Mammary epithelial cell (primary cell): ENCODE measurements at regions of chr1 and their contacts with region 1.

Region 1: DNA sequence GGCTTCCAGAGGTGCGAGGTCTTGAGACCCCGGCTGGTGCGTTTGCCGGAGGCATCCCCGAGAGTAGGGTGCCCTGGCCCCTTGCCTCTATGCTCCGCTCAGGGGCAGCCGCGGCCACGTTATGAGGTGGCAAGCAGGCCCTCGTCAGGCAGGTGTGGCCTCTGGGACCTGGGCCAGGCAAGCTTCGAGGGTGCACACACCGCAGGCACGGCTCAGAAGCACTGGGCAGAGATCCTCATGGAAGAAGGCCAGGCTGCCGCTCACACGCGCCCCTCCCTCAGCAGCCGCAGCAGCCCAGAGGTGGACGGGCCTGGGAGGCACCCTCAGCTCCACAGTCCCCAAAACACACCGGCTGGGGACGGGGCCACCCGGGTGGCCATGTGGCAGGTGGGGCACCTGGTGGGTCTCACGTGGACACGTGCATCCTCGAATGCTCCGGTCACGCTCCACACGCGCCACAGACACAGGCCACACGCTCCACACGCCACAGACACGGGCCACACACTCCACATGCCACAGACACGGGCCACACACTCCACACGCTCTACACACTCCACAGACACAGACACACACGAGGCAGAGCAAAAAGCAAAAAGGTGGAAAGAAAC is 6.5 kb downstream of the SDF4 start:
- DNase-seq: no peak
- H3K4me3 ChIP-seq: no peak overlapping the region
- H3K27ac ChIP-seq: no peak overlapping the region
- H3K4me1 ChIP-seq: peaks cover 6% of the 10 kb centered on the region
- H3K27me3 ChIP-seq: no peaks in the 10 kb centered on the region
- CTCF ChIP-seq: no peak

Region 2: GRCh38 chr1:960040-960756 is 265.1 kb before region 1 on chr1 and contains the start of gene KLHL17:
- CTCF ChIA-PET with region 1: no interaction called
- dilution Hi-C with region 1: loop called (anchors 10 kb)
- in situ Hi-C with region 1: no loop called
- intact Hi-C with region 1: no loop called
- DNase-seq: peak; percentile 71
- H3K4me3 ChIP-seq: peak within 1 kb of the TSS; percentile 49 to 67 (median 58)
- H3K27ac ChIP-seq: no peak within 1 kb of the TSS
- H3K4me1 ChIP-seq: peaks cover 15% of the 10 kb centered on the region
- H3K27me3 ChIP-seq: no peaks in the 10 kb centered on the region
- CTCF ChIP-seq: no peak
- total RNA-seq, gene KLHL17: 4.3 to 18.9 TPM

Region 3: DNA sequence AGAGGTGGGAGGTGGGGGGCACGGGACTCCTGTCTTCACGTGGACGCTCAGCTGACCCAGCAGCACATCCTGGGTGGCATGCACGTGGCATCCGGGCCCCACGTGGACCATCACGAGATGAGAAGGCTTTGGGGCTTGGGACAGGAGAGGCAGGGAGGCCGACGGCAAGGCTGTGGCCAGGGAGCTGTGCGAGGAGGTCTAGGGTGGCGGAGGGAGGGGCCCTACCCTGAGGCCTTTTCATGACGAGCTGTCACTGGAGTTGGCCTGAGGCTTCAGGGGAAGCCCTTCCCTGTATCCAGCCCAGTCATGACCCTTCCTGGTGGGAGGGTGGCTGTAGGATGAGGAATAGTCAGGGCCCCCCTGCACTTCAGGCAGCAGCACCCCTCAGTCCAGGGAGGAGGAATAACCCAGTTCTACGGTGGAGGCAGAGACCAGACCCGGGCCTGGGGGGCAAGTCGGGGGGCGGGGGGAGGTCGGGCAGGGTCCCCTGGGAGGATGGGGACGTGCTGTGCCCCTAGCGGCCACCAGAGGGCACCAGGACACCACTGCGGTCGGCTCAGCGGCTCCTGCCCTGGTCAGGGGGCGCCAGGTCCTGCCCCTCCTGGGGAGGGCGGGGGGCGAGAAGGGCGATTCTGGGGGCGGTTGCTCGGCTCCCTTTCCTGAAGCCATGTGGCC is 241.4 kb before region 1 on chr1:
- CTCF ChIA-PET with region 1: no interaction called
- dilution Hi-C with region 1: no loop called
- in situ Hi-C with region 1: no loop called
- intact Hi-C with region 1: no loop called
- DNase-seq: no peak
- H3K4me3 ChIP-seq: no peak overlapping the region
- H3K27ac ChIP-seq: no peak overlapping the region
- H3K4me1 ChIP-seq: no peaks in the 10 kb centered on the region
- H3K27me3 ChIP-seq: peaks cover 2% of the 10 kb centered on the region
- CTCF ChIP-seq: peak; percentile 28 to 86

Region 4: DNA sequence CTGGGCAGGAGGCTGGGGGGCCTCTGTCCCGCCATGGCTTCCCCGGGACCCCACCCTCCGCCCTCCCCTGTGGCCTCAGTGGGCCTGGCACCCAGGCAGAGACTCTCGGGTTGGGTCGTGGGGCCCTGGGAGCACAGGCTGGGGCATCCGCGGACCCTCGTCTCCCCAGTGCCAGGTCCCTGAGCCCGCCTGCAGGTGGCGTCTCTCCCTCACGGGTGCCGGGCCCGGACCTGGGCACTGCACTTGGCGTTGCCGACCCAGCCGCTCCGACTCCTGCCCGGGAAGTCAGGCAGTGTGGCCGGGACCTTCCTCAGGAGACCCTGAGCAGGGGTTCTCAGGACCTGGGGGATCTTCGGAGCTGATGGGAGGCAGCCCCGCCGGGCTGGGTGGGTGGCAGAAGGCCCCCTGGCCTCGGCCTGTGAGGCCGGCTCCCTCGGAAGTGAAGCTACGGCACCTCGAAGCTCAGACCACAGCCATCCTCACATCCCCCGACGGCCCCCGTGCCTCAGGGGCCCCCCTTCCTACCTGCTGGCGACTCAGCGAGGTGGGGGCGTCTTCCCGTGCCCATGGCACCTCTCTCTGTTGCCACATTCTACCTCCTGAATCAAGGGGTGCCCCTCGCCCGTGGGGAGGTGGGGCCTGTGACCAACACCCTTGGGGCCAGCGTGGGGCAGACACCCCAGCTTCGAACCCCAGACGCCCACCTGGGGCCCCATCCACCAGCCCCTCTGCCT is 103.1 kb before region 1 on chr1:
- CTCF ChIA-PET with region 1: no interaction called
- dilution Hi-C with region 1: loop called (anchors 5 kb)
- in situ Hi-C with region 1: no loop called
- intact Hi-C with region 1: loop called (anchors 1 kb)
- DNase-seq: peak; percentile 51
- H3K4me3 ChIP-seq: peak overlapping the region; percentile 22 to 39 (median 32)
- H3K27ac ChIP-seq: no peak overlapping the region
- H3K4me1 ChIP-seq: peaks cover 9% of the 10 kb centered on the region
- H3K27me3 ChIP-seq: peaks cover 2% of the 10 kb centered on the region
- CTCF ChIP-seq: peak; percentile 69 to 92

Region 5: GRCh38 chr1:1173793-1174415 is 51.4 kb before region 1 on chr1 and contains the start of gene TTLL10:
- CTCF ChIA-PET with region 1: no interaction called
- dilution Hi-C with region 1: loop called (anchors 5 kb)
- in situ Hi-C with region 1: no loop called
- intact Hi-C with region 1: no loop called
- DNase-seq: no peak
- H3K4me3 ChIP-seq: no peak within 1 kb of the TSS
- H3K27ac ChIP-seq: no peak within 1 kb of the TSS
- H3K4me1 ChIP-seq: peaks cover 8% of the 10 kb centered on the region
- H3K27me3 ChIP-seq: peaks cover 3% of the 10 kb centered on the region
- CTCF ChIP-seq: no peak
- total RNA-seq, gene TTLL10: not detected

Region 6: GRCh38 chr1:1281533-1282321 is 56.4 kb after region 1 on chr1:
- CTCF ChIA-PET with region 1: no interaction called
- dilution Hi-C with region 1: loop called (anchors 5 kb)
- in situ Hi-C with region 1: no loop called
- intact Hi-C with region 1: no loop called
- DNase-seq: peak; percentile 76
- H3K4me3 ChIP-seq: no peak overlapping the region
- H3K27ac ChIP-seq: no peak overlapping the region
- H3K4me1 ChIP-seq: peaks cover 14% of the 10 kb centered on the region
- H3K27me3 ChIP-seq: no peaks in the 10 kb centered on the region
- CTCF ChIP-seq: no peak

Region 7: DNA sequence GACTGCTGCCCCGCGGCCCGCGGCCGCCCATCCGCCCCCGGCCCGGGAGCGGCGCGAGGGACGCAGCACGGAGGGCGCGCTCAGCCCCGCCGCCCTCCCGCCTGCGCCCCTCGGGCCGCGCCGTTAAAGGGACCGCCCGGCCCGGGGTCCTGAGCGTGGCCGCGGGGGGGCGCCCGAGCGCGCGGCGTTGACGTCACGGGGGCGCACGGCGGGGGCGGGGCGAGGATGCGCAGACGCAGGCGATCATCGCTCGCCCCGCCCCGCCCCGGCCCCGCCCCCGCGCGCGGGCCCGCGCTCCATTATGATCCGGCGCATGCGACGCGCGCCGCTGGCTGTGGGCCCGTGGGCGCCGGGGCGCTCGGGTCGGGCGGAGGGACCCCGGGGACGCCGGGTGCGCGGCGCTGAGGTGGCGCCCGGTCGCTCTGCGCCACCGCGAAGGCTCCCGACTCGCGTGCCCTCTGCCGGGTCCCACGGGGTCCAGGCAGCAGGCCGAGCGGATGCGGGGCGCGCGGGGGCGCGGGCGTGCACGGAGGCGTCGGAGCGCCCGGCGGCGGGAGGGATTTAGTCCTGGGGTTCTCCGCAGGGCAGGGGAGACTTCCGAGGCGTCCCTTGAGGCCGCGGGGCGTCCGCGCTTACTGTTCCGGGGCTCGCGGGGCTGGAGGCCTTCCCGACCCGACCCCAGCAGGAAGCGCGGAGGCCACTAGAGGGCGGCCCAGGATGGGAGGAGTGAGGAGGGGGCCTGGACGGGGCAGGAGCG is 124.1 kb after region 1 on chr1 and contains the start of gene DVL1:
- CTCF ChIA-PET with region 1: no interaction called
- dilution Hi-C with region 1: loop called (anchors 10 kb)
- in situ Hi-C with region 1: no loop called
- intact Hi-C with region 1: no loop called
- DNase-seq: peak; percentile 31
- H3K4me3 ChIP-seq: peak within 1 kb of the TSS; percentile 66 to 93 (median 87)
- H3K27ac ChIP-seq: peak within 1 kb of the TSS; percentile 47
- H3K4me1 ChIP-seq: peaks cover 37% of the 10 kb centered on the region
- H3K27me3 ChIP-seq: no peaks in the 10 kb centered on the region
- CTCF ChIP-seq: peak; percentile 17 to 60
- total RNA-seq, gene DVL1: 62.0 to 109 TPM

Region 8: GRCh38 chr1:1419642-1420384 is 194.5 kb after region 1 on chr1:
- CTCF ChIA-PET with region 1: no interaction called
- dilution Hi-C with region 1: no loop called
- in situ Hi-C with region 1: no loop called
- intact Hi-C with region 1: no loop called
- DNase-seq: no peak
- H3K4me3 ChIP-seq: peak overlapping the region in 2 of 3 experiments; percentile 34 to 37
- H3K27ac ChIP-seq: no peak overlapping the region
- H3K4me1 ChIP-seq: peaks cover 43% of the 10 kb centered on the region
- H3K27me3 ChIP-seq: no peaks in the 10 kb centered on the region
- CTCF ChIP-seq: no peak

Region 9: DNA sequence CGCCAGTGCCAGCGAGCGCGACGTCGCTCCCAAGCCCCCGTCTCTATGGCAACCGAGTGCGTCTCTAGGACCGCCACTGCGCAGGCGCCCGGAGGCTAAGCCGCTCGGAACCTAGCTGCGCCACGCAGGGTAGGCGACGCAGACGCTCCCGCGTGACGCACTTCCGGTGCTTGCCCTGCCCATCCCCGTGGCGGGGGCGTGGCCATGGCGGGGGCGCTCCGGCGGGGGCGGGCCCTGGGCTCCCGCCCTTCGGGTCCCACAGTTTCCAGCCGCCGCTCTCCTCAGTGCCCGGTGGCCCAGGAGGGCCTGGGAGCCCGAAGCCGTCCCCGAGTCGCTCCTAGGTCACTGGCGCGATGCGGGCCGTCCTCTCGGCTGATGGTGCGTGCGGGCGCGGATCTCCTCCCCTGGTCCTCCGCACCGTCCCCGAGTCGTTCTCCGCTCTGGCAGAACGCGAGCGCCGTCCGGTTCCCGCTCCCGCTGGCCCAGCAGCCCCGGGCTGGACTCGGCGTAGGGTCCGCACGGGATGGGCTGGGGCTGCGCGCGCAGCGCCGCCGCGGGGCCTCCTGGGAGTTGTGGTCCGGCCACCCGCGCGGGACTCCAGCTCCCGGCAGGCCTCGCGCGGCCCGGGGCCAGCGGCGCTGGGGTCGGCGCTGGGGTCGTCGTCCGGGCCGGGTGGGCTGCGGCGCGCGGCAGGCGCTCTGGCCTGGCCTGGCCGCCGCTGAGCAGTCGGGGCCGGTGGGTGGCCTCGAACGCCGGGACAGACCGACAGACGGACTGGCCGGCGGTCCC is 390.1 kb after region 1 on chr1 and contains the start of gene MIB2:
- CTCF ChIA-PET with region 1: no interaction called
- dilution Hi-C with region 1: loop called (anchors 10 kb)
- in situ Hi-C with region 1: no loop called
- intact Hi-C with region 1: no loop called
- DNase-seq: peak; percentile 92
- H3K4me3 ChIP-seq: peak within 1 kb of the TSS; percentile 91 to 99 (median 93)
- H3K27ac ChIP-seq: peak within 1 kb of the TSS; percentile 89
- H3K4me1 ChIP-seq: peaks cover 17% of the 10 kb centered on the region
- H3K27me3 ChIP-seq: no peaks in the 10 kb centered on the region
- CTCF ChIP-seq: no peak
- total RNA-seq, gene MIB2: 44.8 to 48.5 TPM